ENCODE measurements at regions of chr1 and their contacts with region 1.

Region 1: DNA sequence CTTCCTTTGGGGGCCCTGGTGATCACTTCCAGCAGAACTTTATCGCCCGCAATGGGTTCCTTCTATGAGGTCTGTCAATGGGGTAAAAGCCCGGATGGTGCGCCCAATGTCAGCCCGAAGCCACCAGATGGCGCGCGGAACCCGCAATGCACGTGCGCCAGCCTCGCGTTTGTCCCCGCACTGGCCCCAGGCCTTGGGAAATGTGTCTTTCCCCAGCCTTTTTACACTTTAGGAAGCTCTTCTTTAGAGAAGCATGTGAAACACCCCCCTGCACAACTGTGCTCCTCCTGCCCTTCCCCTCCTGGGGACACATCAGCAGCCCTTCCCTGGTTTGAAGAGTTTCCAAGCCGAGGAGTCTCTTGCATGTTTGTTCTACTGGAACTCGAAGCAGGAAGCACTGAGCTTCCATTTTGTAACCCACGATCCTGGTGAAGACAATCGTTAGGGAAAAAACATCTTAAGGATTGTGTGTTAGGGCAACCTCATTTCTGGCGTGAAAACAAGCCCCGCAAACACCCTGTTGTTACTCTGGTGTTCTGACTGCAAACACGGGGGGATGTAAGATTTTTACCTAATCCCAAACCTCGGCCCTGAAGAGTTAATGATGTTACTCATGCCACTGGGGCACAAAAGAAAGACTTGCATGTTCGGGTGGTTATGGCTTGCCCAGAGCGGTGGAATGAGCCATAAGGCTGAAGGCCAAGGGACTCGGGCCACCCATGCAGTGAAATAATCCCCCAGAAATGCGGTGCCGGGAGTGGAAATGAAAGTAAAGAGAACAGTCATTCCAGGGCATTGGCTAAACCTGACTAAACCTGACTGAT is 20.4 kb upstream of the TARBP1 start:
- DNase-seq: peak; percentile 57 to 81 (median 65)
- H3K4me3 ChIP-seq: no peak overlapping the region
- H3K4me3 Mint-ChIP-seq: peak overlapping the region in 4 of 7 donors; percentile 20 to 41 (median 36)
- H3K27ac ChIP-seq: no peak overlapping the region
- H3K27ac Mint-ChIP-seq: peak overlapping the region in 2 of 8 donors; percentile 46 to 61
- H3K4me1 ChIP-seq: no peaks in the 10 kb centered on the region
- H3K4me1 Mint-ChIP-seq: peaks cover 6 to 15% (median 13%) of the 10 kb centered on the region in 3 donors
- H3K27me3 ChIP-seq: no peaks in the 10 kb centered on the region
- H3K27me3 Mint-ChIP-seq: peaks cover 4 to 10% of the 10 kb centered on the region in 2 donors

Region 2: DNA sequence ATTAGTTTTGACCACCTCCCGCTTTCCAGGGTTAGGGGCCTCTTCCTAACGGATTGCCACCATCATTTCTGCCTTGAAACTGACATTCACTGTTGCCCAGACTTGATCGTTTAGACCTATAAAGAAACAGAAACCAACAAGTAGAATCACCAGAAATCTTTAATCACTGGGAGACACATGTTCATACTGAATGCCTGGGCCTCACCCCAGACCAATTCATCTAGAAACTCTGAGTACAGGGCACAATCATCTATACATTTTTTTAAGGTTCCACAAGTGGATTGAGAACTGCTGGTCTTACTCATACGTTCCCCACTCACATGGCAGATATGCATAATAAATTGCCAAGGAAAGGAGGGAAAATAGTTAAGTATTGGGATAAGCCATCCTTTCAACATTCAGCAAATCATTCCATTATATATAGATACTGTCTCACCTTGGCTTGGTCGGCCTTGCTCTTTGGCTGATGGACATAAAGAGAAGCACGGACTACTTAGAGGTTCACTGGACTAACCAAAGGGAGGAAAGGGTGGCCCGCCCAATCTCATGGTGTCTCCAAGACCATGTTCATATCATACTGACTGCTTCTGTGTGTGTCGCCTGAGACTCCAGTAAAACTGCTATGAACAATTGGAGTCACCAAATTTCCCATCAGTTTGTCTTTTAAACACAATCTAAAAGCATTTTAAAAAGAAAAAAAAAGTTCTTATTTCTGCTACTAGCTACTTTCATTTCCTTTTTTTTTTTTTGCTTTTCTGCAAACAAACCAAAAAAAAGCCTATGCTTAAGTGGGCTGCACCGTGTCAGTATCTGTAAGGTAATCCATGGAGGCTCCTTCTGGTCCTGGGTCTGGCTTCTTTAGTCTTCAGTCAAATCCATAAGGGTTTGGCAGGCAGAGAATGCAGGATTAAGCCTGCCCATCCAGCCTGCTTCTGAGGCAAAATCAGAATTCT is 11.0 kb before region 1 on chr1:
- CTCF ChIA-PET with region 1: interaction called, 10 read pairs
- POLR2A ChIA-PET with region 1: no interaction called
- DNase-seq: no peak
- H3K4me3 ChIP-seq: no peak overlapping the region
- H3K4me3 Mint-ChIP-seq: no peak overlapping the region
- H3K27ac ChIP-seq: no peak overlapping the region
- H3K27ac Mint-ChIP-seq: no peak overlapping the region
- H3K4me1 ChIP-seq: peaks cover 8% of the 10 kb centered on the region
- H3K4me1 Mint-ChIP-seq: peaks cover 2 to 5% (median 5%) of the 10 kb centered on the region in 3 donors
- H3K27me3 ChIP-seq: no peaks in the 10 kb centered on the region
- H3K27me3 Mint-ChIP-seq: peaks cover 2 to 21% of the 10 kb centered on the region in 2 donors